ENCODE measurements at regions of chr11 and their contacts with region 1.

Region 1: GRCh38 chr11:76152086-76152681 is 54.1 kb downstream of the WNT11 start:
- DNase-seq: peak; percentile 96
- ATAC-seq: peak; percentile 98
- H3K4me3 Mint-ChIP-seq: peak overlapping the region; percentile 57
- H3K27ac Mint-ChIP-seq: peak overlapping the region; percentile 59
- H3K4me1 Mint-ChIP-seq: peaks cover 18% of the 10 kb centered on the region
- H3K27me3 Mint-ChIP-seq: peaks cover 16% of the 10 kb centered on the region

Region 2: DNA sequence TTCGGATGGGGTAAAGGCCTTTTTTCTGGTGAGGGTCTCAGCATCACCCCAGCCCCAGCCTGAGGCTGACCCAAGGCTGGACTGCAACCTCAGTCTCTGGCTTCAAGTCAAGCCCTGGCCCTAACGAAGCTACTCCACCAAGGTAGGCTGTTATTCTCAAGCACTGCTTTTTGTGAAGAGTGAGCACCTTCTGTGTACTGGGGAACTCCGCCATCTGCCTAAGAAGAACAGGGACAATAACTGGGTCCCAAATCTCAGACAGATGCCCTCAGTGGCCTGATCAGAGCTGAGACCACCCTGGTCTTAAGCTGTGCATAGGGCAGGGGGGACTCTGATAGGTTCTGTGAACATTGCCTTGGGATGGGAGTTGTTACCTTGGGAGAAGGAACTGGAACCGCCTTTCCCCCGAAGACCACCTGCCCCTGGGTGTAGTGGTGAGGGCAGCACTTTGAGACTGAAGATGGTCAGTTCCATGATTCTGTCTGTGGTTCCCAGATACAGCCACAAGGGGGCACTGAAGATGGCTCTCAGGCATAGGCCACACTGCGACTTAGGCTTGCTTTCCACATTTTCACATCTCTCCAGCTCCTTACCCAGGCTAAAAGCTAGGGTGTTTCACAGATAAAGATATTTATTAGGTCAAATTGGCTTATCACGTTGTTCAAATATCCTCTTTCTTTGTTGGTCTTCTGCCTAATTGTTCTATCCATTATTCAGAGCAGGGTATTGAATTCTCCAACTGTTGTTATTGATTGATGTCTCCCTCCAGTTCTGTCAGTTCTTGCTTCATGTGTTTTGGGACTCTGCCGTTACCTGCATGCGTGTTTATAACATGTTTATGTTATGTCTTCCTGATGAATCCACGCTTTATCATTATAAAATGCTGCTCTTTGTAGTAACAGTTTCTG is 349.0 kb before region 1 on chr11:
- CTCF ChIA-PET with region 1: interaction called, 11 read pairs
- POLR2A ChIA-PET with region 1: no interaction called
- intact Hi-C with region 1: loop called (anchors 1 to 5 kb)
- DNase-seq: peak; percentile 84
- ATAC-seq: peak; percentile 92
- H3K4me3 Mint-ChIP-seq: no peak overlapping the region
- H3K27ac Mint-ChIP-seq: no peak overlapping the region
- H3K4me1 Mint-ChIP-seq: peaks cover 10% of the 10 kb centered on the region
- H3K27me3 Mint-ChIP-seq: no peaks in the 10 kb centered on the region

Region 3: DNA sequence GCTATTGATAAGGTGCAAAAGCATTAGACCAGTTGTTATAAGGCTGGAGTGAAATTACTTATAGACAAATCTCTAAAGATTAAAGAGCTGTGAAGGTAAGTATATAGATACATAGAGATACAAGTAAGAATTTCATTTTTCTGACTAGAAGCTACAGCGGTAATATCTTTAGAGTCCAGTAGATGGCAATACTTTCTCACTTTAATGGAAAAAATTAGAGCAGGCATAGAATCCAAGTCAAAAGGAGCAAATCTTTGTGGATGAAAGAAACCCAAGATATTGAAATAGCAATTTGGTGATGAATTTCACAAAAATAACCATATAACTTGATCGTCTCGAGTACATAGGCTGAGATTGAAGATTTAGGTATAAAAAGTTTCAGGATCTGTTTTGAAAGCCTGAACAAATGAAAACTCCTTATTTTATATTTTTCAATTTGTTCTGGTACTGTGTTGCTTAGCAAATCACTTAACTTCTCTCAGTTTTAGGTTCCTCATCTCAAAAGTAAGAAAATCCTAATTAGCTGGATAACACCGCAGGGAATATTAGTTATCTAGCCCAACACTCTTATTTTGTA is 255.3 kb before region 1 on chr11:
- CTCF ChIA-PET with region 1: interaction called, 71 read pairs
- POLR2A ChIA-PET with region 1: no interaction called
- intact Hi-C with region 1: loop called (anchors 1 kb)
- DNase-seq: no peak
- ATAC-seq: no peak
- H3K4me3 Mint-ChIP-seq: no peak overlapping the region
- H3K27ac Mint-ChIP-seq: no peak overlapping the region
- H3K4me1 Mint-ChIP-seq: peaks cover 27% of the 10 kb centered on the region
- H3K27me3 Mint-ChIP-seq: no peaks in the 10 kb centered on the region

Region 4: DNA sequence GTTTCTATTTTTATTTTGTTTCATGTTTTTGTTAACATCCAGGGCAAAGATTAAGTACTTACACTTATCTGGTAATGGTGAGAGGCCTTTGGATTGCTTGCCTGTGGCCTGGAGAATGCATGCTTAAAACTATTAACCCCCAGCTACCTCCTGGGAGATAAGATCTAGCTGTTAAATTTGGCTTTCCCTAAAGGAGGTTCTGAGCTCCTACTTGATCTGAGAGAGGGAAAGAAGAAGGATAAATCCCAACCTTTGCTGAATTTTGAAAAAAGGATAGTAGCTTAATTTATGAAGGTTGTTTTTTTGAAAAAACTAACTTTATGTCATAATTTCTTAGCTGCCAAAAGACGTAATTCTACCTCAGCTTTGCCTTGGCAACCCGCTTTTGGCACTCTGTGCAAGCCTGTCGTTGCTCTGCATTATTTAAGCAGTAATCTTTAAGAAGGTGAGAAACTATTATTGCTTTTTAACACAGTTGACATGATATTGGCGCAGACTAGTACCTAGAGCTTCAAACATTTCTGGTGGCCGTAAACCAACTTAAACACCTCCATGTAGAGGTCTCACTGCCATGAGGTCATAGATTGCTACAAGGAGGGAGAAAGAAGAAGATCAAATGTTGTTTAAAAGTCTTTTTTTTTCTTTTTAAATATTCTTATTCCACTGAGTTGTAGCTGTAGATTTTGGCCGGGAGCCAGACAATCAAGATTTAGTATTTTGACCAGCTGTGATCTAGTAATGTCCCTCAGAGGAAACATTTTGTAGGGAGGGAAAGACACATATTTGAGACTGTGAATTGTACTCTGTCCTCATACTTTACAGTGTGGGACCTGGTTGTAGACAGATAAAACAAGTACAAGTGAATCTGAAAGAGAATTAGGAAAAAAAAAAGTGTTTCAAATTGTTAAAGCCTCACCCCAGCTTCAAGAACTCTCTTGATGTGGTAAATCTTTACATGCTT is 20.2 kb before region 1 on chr11:
- CTCF ChIA-PET with region 1: interaction called, 17 read pairs
- POLR2A ChIA-PET with region 1: no interaction called
- intact Hi-C with region 1: no loop called
- DNase-seq: no peak
- ATAC-seq: peak; percentile 78
- H3K4me3 Mint-ChIP-seq: no peak overlapping the region
- H3K27ac Mint-ChIP-seq: no peak overlapping the region
- H3K4me1 Mint-ChIP-seq: peaks cover 31% of the 10 kb centered on the region
- H3K27me3 Mint-ChIP-seq: no peaks in the 10 kb centered on the region

Region 5: DNA sequence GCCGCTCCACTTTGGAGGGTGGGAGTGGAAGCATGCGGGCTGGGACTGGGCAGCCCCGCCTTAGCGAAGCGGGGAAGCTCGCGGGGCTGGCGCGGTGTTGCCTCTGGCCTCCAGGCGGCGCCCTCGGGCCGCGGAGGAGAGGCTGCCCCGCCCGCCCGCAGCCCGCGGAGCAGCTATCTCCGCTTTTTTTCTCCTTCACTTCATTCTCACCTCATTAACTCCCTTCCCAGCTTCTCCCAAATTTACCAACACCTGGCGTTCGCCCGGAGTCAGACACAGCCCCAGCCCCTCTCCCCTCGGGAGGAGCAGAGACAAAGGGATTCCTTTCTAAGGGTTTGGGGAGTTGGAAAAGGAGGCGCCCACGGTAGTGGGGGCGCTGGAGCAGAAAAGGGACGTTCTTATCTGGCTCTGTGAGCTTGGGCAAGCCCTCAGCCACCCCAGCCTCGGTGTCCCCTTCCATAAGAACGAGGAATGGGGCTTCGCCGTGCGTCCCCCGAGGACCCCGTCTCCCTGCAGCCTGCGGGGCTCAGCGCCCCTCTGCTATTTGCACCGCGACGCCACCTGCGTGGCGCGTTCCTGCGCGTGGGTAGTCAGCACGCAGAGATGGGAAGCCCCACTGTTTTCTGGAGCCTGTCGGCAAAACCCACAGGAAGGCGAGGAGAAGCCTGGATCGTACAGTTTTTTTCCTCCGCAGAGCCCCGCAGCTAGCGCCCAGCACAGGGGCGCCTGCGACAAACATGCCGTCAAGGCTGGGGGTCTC is 55.6 kb after region 1 on chr11:
- CTCF ChIA-PET with region 1: interaction called, 16 read pairs
- POLR2A ChIA-PET with region 1: no interaction called
- intact Hi-C with region 1: no loop called
- DNase-seq: peak; percentile 87
- ATAC-seq: peak; percentile 76
- H3K4me3 Mint-ChIP-seq: peak overlapping the region; percentile 60
- H3K27ac Mint-ChIP-seq: no peak overlapping the region
- H3K4me1 Mint-ChIP-seq: peaks cover 15% of the 10 kb centered on the region
- H3K27me3 Mint-ChIP-seq: peaks cover 55% of the 10 kb centered on the region

Measured in activated CD4-positive, alpha-beta T cell treated with anti-CD3 and anti-CD28 coated beads for 36 hours (primary cell).